ENCODE measurements at regions of chr16 and their contacts with region 1.

Region 1: DNA sequence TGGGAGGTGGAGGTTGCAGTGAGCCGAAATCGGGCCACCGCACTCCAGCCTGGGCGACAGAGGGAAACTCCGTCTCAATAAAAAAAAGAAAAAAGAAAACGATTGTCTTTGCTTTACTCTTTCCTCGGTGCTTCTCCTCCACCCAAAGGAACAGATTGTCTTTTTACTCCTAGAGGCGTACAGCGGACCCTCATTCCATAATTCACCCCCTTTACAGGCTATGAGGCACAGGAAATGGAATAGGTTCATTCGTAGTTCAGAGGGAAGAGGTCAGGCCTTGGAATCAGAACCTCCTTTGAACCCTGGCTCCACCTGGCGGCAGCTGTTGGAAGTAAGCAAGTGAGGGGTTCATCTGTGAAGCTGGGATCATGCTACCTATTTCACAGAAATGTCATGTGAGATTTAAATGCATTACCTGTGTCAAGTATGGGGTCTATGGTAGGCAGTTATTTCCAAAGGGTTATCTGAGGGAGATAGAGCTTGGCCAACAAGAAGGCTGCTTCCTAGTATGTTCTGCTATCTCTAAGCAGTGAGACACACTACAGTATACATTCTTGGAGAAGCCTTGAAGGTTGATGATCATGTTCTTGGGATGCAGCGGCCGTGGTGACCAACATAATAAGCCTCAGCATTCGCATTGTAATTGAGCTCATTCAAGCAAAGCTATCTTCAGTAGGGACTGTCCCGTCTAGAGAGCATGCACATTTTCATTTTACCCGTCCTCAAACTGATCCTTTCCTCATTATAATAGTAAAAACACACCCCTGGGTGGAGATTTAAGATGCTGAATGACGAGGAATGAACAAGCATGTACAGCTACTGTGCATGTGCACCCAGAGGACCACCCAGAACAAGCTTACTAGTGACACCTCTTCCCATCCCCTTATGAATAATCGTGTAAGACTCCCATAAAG is 18.7 kb upstream of the ZNF689 start:
- DNase-seq: peak; percentile 77 to 92 (median 84)
- ATAC-seq: peak; percentile 96
- H3K4me3 ChIP-seq: peak overlapping the region in 1 of 2 experiments; percentile 10
- H3K4me3 Mint-ChIP-seq: peak overlapping the region; percentile 79
- H3K27ac ChIP-seq: peak overlapping the region in 1 of 2 experiments; percentile 19
- H3K27ac Mint-ChIP-seq: no peak overlapping the region
- H3K4me1 ChIP-seq: peaks cover 9% of the 10 kb centered on the region
- H3K4me1 Mint-ChIP-seq: peaks cover 5% of the 10 kb centered on the region
- H3K27me3 ChIP-seq: no peaks in the 10 kb centered on the region
- H3K27me3 Mint-ChIP-seq: no peaks in the 10 kb centered on the region
- CTCF ChIP-seq: peak; percentile 85

Region 2: GRCh38 chr16:30149250-30149930 is 479.5 kb before region 1 on chr16:
- CTCF ChIA-PET with region 1: no interaction called
- POLR2A ChIA-PET with region 1: no interaction called
- intact Hi-C with region 1: no loop called
- DNase-seq: no peak
- ATAC-seq: no peak
- H3K4me3 ChIP-seq: no peak overlapping the region
- H3K4me3 Mint-ChIP-seq: no peak overlapping the region
- H3K27ac ChIP-seq: no peak overlapping the region
- H3K27ac Mint-ChIP-seq: no peak overlapping the region
- H3K4me1 ChIP-seq: no peaks in the 10 kb centered on the region
- H3K4me1 Mint-ChIP-seq: peaks cover 5% of the 10 kb centered on the region
- H3K27me3 ChIP-seq: no peaks in the 10 kb centered on the region
- H3K27me3 Mint-ChIP-seq: no peaks in the 10 kb centered on the region
- CTCF ChIP-seq: no peak

Region 3: DNA sequence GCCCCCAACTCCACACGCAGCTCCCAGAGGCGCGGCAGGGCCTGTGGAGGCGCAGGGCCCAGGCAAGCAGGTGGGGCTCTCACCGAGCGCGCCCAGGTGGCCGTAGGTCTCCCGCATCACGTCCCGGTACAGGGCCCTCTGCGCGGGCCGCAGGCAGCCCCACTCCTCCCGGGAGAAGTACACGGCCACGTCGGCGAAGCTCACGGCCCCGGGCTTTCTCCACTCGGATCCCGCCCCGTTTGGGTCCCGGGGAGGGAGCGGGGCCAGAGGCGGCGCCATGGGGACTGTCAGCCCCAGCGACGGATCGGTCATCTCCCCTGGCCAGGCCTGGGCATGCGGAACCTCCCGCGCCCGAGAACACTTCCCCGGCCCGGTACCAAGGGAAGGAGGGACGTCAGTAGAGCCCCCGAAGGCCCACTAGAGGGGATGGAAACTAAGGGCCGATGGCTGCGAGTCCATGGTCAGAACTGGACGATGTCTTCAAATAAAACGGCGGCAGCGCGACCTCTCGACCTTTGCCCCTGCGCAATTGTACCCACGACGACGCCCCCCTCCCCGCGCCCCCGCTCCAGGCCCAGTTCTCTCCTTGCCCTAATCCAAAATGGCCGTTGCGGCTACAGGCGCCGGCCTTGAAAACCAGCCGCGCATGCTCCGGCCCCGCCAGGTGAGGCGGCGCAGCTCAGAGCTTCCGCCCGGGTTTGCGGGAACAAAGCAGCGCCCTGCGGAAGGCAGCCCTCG is 94.3 kb before region 1 on chr16 and contains the start of gene ZNF747:
- CTCF ChIA-PET with region 1: interaction called, 9 read pairs
- POLR2A ChIA-PET with region 1: no interaction called
- intact Hi-C with region 1: loop called in 1 of 2 experiments (anchors 1 kb)
- DNase-seq: peak; percentile 77 to 95 (median 92)
- ATAC-seq: peak; percentile 80
- H3K4me3 ChIP-seq: peak within 1 kb of the TSS; percentile 82 to 96
- H3K4me3 Mint-ChIP-seq: peak within 1 kb of the TSS; percentile 89
- H3K27ac ChIP-seq: peak within 1 kb of the TSS; percentile 77 to 97
- H3K27ac Mint-ChIP-seq: peak within 1 kb of the TSS; percentile 96
- H3K4me1 ChIP-seq: peaks cover 13% of the 10 kb centered on the region
- H3K4me1 Mint-ChIP-seq: peaks cover 38% of the 10 kb centered on the region
- H3K27me3 ChIP-seq: no peaks in the 10 kb centered on the region
- H3K27me3 Mint-ChIP-seq: no peaks in the 10 kb centered on the region
- CTCF ChIP-seq: no peak
- total RNA-seq, gene ZNF747: 6.2 to 6.3 TPM

Region 4: GRCh38 chr16:30585400-30586189 is 43.3 kb before region 1 on chr16 and contains the start of gene ZNF785:
- CTCF ChIA-PET with region 1: interaction called, 9 read pairs
- POLR2A ChIA-PET with region 1: no interaction called
- intact Hi-C with region 1: loop called (anchors 1 kb)
- DNase-seq: peak; percentile 81 to 98 (median 91)
- ATAC-seq: peak; percentile 99
- H3K4me3 ChIP-seq: peak within 1 kb of the TSS; percentile 68 to 78
- H3K4me3 Mint-ChIP-seq: peak within 1 kb of the TSS; percentile 94
- H3K27ac ChIP-seq: peak within 1 kb of the TSS; percentile 44 to 61
- H3K27ac Mint-ChIP-seq: peak within 1 kb of the TSS; percentile 91
- H3K4me1 ChIP-seq: peaks cover 12% of the 10 kb centered on the region
- H3K4me1 Mint-ChIP-seq: peaks cover 27% of the 10 kb centered on the region
- H3K27me3 ChIP-seq: no peaks in the 10 kb centered on the region
- H3K27me3 Mint-ChIP-seq: no peaks in the 10 kb centered on the region
- CTCF ChIP-seq: no peak
- total RNA-seq, gene ZNF785: 5.0 to 6.9 TPM

Region 5: DNA sequence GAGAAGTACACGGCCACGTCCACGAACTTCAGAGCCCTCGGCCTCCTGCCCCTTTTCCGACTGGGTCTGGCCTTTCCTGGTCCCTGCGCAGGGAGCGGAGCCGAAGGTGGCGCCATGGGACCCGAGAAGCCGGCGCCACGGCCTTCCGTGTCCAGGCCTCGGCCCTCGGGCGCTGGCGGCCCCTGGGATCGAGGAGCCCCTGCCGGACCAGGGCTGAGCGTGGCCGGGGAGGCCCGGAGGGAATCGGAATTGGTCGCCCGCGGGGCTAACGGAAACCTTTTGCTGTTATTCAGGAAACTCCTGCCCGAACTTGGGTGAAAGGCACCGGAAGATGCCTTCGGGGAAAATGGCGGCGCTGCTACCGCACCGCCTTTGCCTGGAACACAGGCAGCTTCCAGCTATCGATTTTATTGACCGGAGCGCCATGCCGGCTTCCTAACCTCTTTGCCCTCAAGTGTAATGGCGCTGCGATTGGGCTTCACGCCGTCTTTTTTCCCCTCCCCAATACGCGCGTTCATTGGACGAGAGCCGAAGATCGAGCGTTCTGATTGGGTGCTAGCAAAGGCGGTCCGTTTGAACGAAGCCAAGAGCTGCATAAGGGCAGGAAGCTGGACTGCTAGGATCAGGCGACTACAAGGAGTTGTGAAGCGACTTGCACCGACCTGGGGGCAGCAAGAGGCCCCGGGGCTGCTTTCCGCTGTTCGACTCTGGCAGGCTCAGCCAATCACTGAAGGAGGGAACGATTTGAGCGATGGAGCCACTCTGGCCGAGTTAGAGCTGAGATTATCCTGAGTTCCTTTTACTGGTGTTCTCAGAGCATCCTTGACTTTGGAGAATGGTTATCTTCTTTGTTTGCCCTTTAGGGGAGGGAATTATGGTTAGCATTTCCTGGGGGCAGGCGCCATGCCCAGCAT is 18.7 kb before region 1 on chr16 and contains the start of gene ZNF689:
- CTCF ChIA-PET with region 1: interaction called, 15 read pairs
- POLR2A ChIA-PET with region 1: interaction called, 6 read pairs
- intact Hi-C with region 1: loop called (anchors 1 to 2 kb)
- DNase-seq: peak; percentile 90 to 98 (median 94)
- ATAC-seq: peak; percentile 88
- H3K4me3 ChIP-seq: peak within 1 kb of the TSS; percentile 69 to 93
- H3K4me3 Mint-ChIP-seq: peak within 1 kb of the TSS; percentile 95
- H3K27ac ChIP-seq: peak within 1 kb of the TSS; percentile 91 to 93
- H3K27ac Mint-ChIP-seq: peak within 1 kb of the TSS; percentile 98
- H3K4me1 ChIP-seq: peaks cover 12% of the 10 kb centered on the region
- H3K4me1 Mint-ChIP-seq: peaks cover 24% of the 10 kb centered on the region
- H3K27me3 ChIP-seq: peaks cover 0 to 2% of the 10 kb centered on the region in 2 experiments
- H3K27me3 Mint-ChIP-seq: no peaks in the 10 kb centered on the region
- CTCF ChIP-seq: no peak
- total RNA-seq, gene ZNF689: 15.6 to 17.5 TPM

Region 6: GRCh38 chr16:30692381-30693064 is 63.6 kb after region 1 on chr16:
- CTCF ChIA-PET with region 1: interaction called, 7 read pairs
- POLR2A ChIA-PET with region 1: interaction called, 5 read pairs
- intact Hi-C with region 1: loop called in 1 of 2 experiments (anchors 1 kb)
- DNase-seq: no peak
- ATAC-seq: no peak
- H3K4me3 ChIP-seq: no peak overlapping the region
- H3K4me3 Mint-ChIP-seq: no peak overlapping the region
- H3K27ac ChIP-seq: no peak overlapping the region
- H3K27ac Mint-ChIP-seq: no peak overlapping the region
- H3K4me1 ChIP-seq: peaks cover 7% of the 10 kb centered on the region
- H3K4me1 Mint-ChIP-seq: peaks cover 15% of the 10 kb centered on the region
- H3K27me3 ChIP-seq: no peaks in the 10 kb centered on the region
- H3K27me3 Mint-ChIP-seq: no peaks in the 10 kb centered on the region
- CTCF ChIP-seq: no peak

Region 7: GRCh38 chr16:31333686-31334649 is 705.1 kb after region 1 on chr16:
- CTCF ChIA-PET with region 1: no interaction called
- POLR2A ChIA-PET with region 1: no interaction called
- intact Hi-C with region 1: no loop called
- DNase-seq: peak in 6 of 9 experiments; percentile 27 to 66 (median 39)
- ATAC-seq: peak; percentile 70
- H3K4me3 ChIP-seq: no peak overlapping the region
- H3K4me3 Mint-ChIP-seq: no peak overlapping the region
- H3K27ac ChIP-seq: no peak overlapping the region
- H3K27ac Mint-ChIP-seq: peak overlapping the region; percentile 49
- H3K4me1 ChIP-seq: peaks cover 37% of the 10 kb centered on the region
- H3K4me1 Mint-ChIP-seq: peaks cover 43% of the 10 kb centered on the region
- H3K27me3 ChIP-seq: no peaks in the 10 kb centered on the region
- H3K27me3 Mint-ChIP-seq: no peaks in the 10 kb centered on the region
- CTCF ChIP-seq: peak; percentile 12

Measured in CD8-positive, alpha-beta T cell (primary cell).